ENCODE measurements at regions of chr22 and their contacts with region 1.

Region 1: GRCh38 chr22:16917144-16918003 is 90.6 kb downstream of the GAB4 start:
- DNase-seq: peak in 1 of 2 experiments; percentile 89
- H3K4me3 ChIP-seq: no peak overlapping the region
- H3K27ac ChIP-seq: no peak overlapping the region
- H3K4me1 ChIP-seq: no peaks in the 10 kb centered on the region
- H3K27me3 ChIP-seq: no peaks in the 10 kb centered on the region
- CTCF ChIP-seq: peak; percentile 67 to 80 (median 72)
- EP300 ChIP-seq: no peak
- POLR2A ChIP-seq: no peak
- RAD21 ChIP-seq: peak; percentile 63 to 71

Region 2: GRCh38 chr22:16932577-16932976 is 15.2 kb after region 1 on chr22:
- CTCF ChIA-PET with region 1: interaction called, 16 read pairs
- POLR2A ChIA-PET with region 1: no interaction called
- DNase-seq: no peak
- H3K4me3 ChIP-seq: no peak overlapping the region
- H3K27ac ChIP-seq: no peak overlapping the region
- H3K4me1 ChIP-seq: no peaks in the 10 kb centered on the region; a peak in 2 of 7 replicates
- H3K27me3 ChIP-seq: no peaks in the 10 kb centered on the region; a peak in 1 of 7 replicates
- CTCF ChIP-seq: peak; percentile 20 to 23 (median 23); a peak in 3 of 4 replicates
- EP300 ChIP-seq: no peak
- POLR2A ChIP-seq: no peak
- RAD21 ChIP-seq: peak; percentile 45 to 64

Region 3: GRCh38 chr22:16975155-16975885 is 57.9 kb after region 1 on chr22:
- CTCF ChIA-PET with region 1: no interaction called
- POLR2A ChIA-PET with region 1: no interaction called
- DNase-seq: no peak
- H3K4me3 ChIP-seq: no peak overlapping the region
- H3K27ac ChIP-seq: no peak overlapping the region
- H3K4me1 ChIP-seq: no peaks in the 10 kb centered on the region
- H3K27me3 ChIP-seq: no peaks in the 10 kb centered on the region
- CTCF ChIP-seq: no peak
- EP300 ChIP-seq: no peak
- POLR2A ChIP-seq: no peak
- RAD21 ChIP-seq: no peak

Region 4: GRCh38 chr22:17009640-17010291 is 92.4 kb after region 1 on chr22:
- CTCF ChIA-PET with region 1: no interaction called
- POLR2A ChIA-PET with region 1: no interaction called
- DNase-seq: peak in 1 of 2 experiments; percentile 54
- H3K4me3 ChIP-seq: no peak overlapping the region
- H3K27ac ChIP-seq: no peak overlapping the region
- H3K4me1 ChIP-seq: peaks cover 0 to 2% (median 0%) of the 10 kb centered on the region in 4 experiments; a peak in 1 of 7 replicates
- H3K27me3 ChIP-seq: peaks cover 0 to 5% (median 3%) of the 10 kb centered on the region in 4 experiments; a peak in 2 of 7 replicates
- CTCF ChIP-seq: peak; percentile 31 to 41 (median 40); a peak in 3 of 4 replicates
- EP300 ChIP-seq: no peak
- POLR2A ChIP-seq: no peak
- RAD21 ChIP-seq: peak in 1 of 2 experiments; percentile 32; a peak in 3 of 4 replicates